Caco-2 (cell line): ENCODE measurements at regions of chr6 and their contacts with region 1.

Region 1: GRCh38 chr6:33323623-33323948 is 6.0 kb upstream of the ZBTB22 start:
- DNase-seq: no peak
- H3K4me3 ChIP-seq: peak overlapping the region; percentile 51
- H3K4me3 Mint-ChIP-seq: peak overlapping the region; percentile 84
- H3K27ac Mint-ChIP-seq: peak overlapping the region; percentile 90
- H3K4me1 ChIP-seq: peaks cover 7% of the 10 kb centered on the region; the same call in 1 of the 2 replicates
- H3K4me1 Mint-ChIP-seq: peaks cover 34% of the 10 kb centered on the region
- H3K27me3 ChIP-seq: no peaks in the 10 kb centered on the region
- H3K27me3 Mint-ChIP-seq: no peaks in the 10 kb centered on the region
- CTCF ChIP-seq: peak in 1 of 2 experiments; percentile 1

Region 2: DNA sequence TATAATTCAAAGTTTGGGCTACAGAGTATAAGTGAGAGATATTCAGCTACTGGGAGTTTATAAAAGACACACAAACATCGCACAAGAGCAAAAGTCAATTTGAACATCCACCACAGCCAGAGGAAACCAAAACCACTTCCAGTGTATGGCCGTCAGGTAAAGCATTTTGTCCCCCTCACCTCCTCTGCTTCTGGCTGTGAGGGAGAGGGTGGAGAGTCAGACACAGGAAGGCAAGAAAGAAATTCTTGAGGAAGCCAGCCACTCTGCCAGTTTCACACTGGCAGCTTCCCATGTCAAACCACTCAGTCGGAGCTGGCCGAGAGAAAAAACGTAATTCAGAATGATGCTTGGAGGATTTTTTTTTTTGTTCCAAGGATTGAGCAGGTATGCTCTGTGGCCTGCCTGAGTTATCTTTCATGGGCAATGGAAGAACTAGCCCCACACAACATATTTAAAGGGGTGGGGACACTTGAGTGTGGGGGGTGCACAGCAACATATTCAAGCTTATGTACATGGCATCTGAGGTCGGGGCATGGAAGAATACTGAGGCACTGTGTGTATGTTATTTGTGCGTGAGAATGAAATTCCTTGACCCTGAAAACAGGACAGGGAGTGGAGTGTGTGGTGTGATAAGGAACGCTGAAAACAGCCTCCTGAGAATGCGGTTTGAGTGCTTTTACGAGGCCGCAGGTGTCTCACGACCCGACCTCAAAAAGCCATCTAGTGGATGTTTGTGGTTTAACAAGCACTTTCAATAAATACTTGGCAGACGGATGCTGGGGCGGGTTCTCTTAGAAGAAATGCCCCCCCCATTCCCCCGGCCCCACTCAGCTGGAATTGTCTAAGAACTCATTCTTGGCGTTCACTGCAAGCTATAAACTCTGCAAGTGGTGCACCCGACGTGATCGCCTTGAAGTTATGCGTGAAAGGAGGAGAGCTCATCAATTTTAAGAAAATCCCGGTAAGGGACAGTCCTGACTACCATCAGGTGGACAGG is 21.4 kb after region 1 on chr6:
- CTCF ChIA-PET with region 1: interaction called, 3 read pairs
- POLR2A ChIA-PET with region 1: no interaction called
- intact Hi-C with region 1: loop called (anchors 1 kb)
- DNase-seq: peak; percentile 78 to 80
- H3K4me3 ChIP-seq: no peak overlapping the region
- H3K4me3 Mint-ChIP-seq: peak overlapping the region; percentile 48
- H3K27ac Mint-ChIP-seq: peak overlapping the region; percentile 73
- H3K4me1 ChIP-seq: peaks cover 13% of the 10 kb centered on the region
- H3K4me1 Mint-ChIP-seq: peaks cover 34% of the 10 kb centered on the region
- H3K27me3 ChIP-seq: no peaks in the 10 kb centered on the region
- H3K27me3 Mint-ChIP-seq: no peaks in the 10 kb centered on the region
- CTCF ChIP-seq: peak; percentile 55 to 59

Region 3: GRCh38 chr6:33410050-33410710 is 86.6 kb after region 1 on chr6:
- CTCF ChIA-PET with region 1: no interaction called
- POLR2A ChIA-PET with region 1: interaction called, 4 read pairs
- intact Hi-C with region 1: loop called (anchors 1 kb)
- DNase-seq: peak; percentile 98 to 99
- H3K4me3 ChIP-seq: peak overlapping the region; percentile 86
- H3K4me3 Mint-ChIP-seq: peak overlapping the region; percentile 96
- H3K27ac Mint-ChIP-seq: peak overlapping the region; percentile 99
- H3K4me1 ChIP-seq: peaks cover 15% of the 10 kb centered on the region
- H3K4me1 Mint-ChIP-seq: peaks cover 13% of the 10 kb centered on the region
- H3K27me3 ChIP-seq: no peaks in the 10 kb centered on the region
- H3K27me3 Mint-ChIP-seq: no peaks in the 10 kb centered on the region
- CTCF ChIP-seq: no peak